GM12878 (cell line): ENCODE measurements at regions of chr6 and their contacts with region 1.

Region 1: DNA sequence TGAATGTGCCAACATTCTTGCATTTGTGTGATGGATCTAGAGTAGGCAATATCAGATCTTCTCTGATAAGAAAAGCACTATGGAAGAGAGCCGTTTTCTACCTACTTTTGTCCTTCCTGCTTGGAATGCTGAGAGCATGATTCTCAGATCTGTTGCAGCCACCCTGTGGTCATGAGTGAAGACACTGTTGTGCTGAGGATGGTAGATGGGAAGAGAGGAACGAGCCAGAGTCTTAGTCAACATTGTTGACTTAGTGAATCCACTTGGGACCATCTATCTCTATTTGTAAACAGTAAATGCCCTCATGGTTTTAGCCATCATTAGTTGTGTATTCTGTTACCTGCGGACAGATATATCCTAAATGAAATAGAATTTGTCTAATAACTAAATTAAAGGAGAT is 202.6 kb downstream of the CD109 start:
- DNase-seq: no peak
- ATAC-seq: no peak
- H3K4me3 ChIP-seq: no peak overlapping the region
- H3K27ac ChIP-seq: no peak overlapping the region
- H3K4me1 ChIP-seq: no peaks in the 10 kb centered on the region
- H3K27me3 ChIP-seq: no peaks in the 10 kb centered on the region
- CTCF ChIP-seq: no peak
- EP300 ChIP-seq: no peak
- POLR2A ChIP-seq: no peak
- RAD21 ChIP-seq: no peak

Region 2: DNA sequence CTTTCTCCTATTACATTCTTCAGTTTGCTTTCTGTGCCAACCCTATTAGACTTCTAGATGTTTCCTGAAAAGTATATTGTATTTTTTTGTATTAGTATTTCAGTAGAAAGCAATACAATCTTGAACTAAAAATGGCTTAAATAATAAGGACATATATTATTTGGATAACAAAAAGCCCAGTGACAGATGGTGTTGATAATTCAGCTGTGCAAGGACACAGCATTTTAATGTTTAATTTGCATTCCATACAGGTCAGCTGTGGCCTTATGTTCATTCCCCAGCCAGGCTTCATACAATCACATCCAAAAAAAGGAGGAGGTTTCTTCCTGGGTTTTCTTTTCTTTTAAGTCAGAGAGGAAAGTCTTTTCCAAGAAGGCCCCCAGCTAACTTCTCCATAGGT is 34.2 kb after region 1 on chr6:
- CTCF ChIA-PET with region 1: no interaction called
- POLR2A ChIA-PET with region 1: no interaction called
- RAD21 ChIA-PET with region 1: no interaction called
- SMC1A ChIA-PET with region 1: no interaction called
- in situ Hi-C with region 1: no loop called
- intact Hi-C with region 1: loop called (anchors 5 kb)
- DNase-seq: no peak
- ATAC-seq: no peak
- H3K4me3 ChIP-seq: no peak overlapping the region
- H3K27ac ChIP-seq: no peak overlapping the region
- H3K4me1 ChIP-seq: no peaks in the 10 kb centered on the region
- H3K27me3 ChIP-seq: no peaks in the 10 kb centered on the region
- CTCF ChIP-seq: no peak
- EP300 ChIP-seq: no peak
- POLR2A ChIP-seq: no peak
- RAD21 ChIP-seq: no peak

Region 3: DNA sequence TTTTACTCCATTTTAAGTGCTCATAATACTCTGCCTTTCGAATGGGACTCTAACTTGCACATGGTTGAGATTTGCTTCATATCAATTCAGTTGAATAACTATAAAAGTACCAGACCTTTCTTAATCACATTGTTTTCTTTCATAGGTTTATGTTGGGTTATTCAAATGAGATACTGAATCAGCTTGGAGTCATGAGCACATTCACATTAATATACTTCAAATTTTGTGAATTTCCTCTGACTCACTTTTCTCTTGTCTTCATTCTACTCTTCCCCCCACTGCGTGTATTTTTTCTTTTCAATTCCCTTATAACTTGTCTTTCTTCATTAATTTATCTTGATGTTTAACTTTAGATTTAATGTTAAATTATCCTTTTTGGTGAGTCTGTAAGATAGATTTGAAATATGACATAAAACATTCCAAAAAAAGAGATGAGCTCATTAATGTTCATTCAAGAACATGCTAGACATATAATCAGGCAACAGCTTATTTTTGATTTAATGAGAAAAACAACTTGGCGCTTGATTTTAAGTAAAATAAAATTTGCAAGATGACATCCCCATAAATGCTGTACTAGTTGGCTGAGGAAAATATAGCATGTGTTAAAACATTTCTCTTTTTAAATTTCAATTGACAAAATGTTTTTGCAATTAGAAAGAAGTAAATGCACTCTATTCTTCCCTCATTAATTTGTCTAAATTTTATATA is 533.4 kb after region 1 on chr6:
- CTCF ChIA-PET with region 1: no interaction called
- POLR2A ChIA-PET with region 1: no interaction called
- RAD21 ChIA-PET with region 1: no interaction called
- SMC1A ChIA-PET with region 1: no interaction called
- in situ Hi-C with region 1: no loop called
- intact Hi-C with region 1: no loop called
- DNase-seq: no peak
- ATAC-seq: no peak
- H3K4me3 ChIP-seq: no peak overlapping the region
- H3K27ac ChIP-seq: no peak overlapping the region
- H3K4me1 ChIP-seq: no peaks in the 10 kb centered on the region
- H3K27me3 ChIP-seq: no peaks in the 10 kb centered on the region
- CTCF ChIP-seq: no peak
- EP300 ChIP-seq: no peak
- POLR2A ChIP-seq: no peak
- RAD21 ChIP-seq: no peak